ENCODE measurements at regions of chr3 and their contacts with region 1.

Region 1: GRCh38 chr3:126180477-126181397 is at the start of gene ALDH1L1:
- DNase-seq: peak; percentile 73 to 96
- H3K4me3 ChIP-seq: peak within 1 kb of the TSS; percentile 74 to 90
- H3K27ac ChIP-seq: peak within 1 kb of the TSS; percentile 98 to 99
- H3K4me1 ChIP-seq: peaks cover 10 to 15% of the 10 kb centered on the region in 2 donors
- H3K27me3 ChIP-seq: no peaks in the 10 kb centered on the region
- CTCF ChIP-seq: no peak
- total RNA-seq, gene ALDH1L1: 36.1 TPM

Region 2: GRCh38 chr3:126014252-126014651 is 166.5 kb before region 1 on chr3:
- intact Hi-C with region 1: no loop called
- DNase-seq: no peak
- H3K4me3 ChIP-seq: no peak overlapping the region
- H3K27ac ChIP-seq: no peak overlapping the region
- H3K4me1 ChIP-seq: no peaks in the 10 kb centered on the region
- H3K27me3 ChIP-seq: no peaks in the 10 kb centered on the region
- CTCF ChIP-seq: no peak

Region 3: GRCh38 chr3:126100634-126101301 is 80.0 kb before region 1 on chr3:
- intact Hi-C with region 1: loop called (anchors 2 kb)
- DNase-seq: peak in 1 of 2 donors; percentile 86
- H3K4me3 ChIP-seq: peak overlapping the region in 1 of 2 donors; percentile 48
- H3K27ac ChIP-seq: peak overlapping the region; percentile 96 to 98
- H3K4me1 ChIP-seq: peaks cover 24 to 46% of the 10 kb centered on the region in 2 donors
- H3K27me3 ChIP-seq: no peaks in the 10 kb centered on the region
- CTCF ChIP-seq: no peak

Region 4: GRCh38 chr3:126134219-126134975 is 46.3 kb before region 1 on chr3:
- intact Hi-C with region 1: loop called (anchors 5 kb)
- DNase-seq: peak in 1 of 2 donors; percentile 80
- H3K4me3 ChIP-seq: no peak overlapping the region
- H3K27ac ChIP-seq: no peak overlapping the region
- H3K4me1 ChIP-seq: no peaks in the 10 kb centered on the region
- H3K27me3 ChIP-seq: no peaks in the 10 kb centered on the region
- CTCF ChIP-seq: peak; percentile 80 to 87 (median 81)

Region 5: GRCh38 chr3:126205717-126206655 is 25.2 kb after region 1 on chr3:
- intact Hi-C with region 1: loop called (anchors 1 kb)
- DNase-seq: peak in 1 of 2 donors; percentile 73
- H3K4me3 ChIP-seq: peak overlapping the region in 1 of 2 donors; percentile 16
- H3K27ac ChIP-seq: peak overlapping the region; percentile 86 to 87
- H3K4me1 ChIP-seq: peaks cover 16 to 45% of the 10 kb centered on the region in 2 donors
- H3K27me3 ChIP-seq: no peaks in the 10 kb centered on the region
- CTCF ChIP-seq: no peak

Region 6: GRCh38 chr3:126259411-126260391 is 79.0 kb after region 1 on chr3:
- intact Hi-C with region 1: loop called (anchors 2 kb)
- DNase-seq: peak; percentile 36 to 91
- H3K4me3 ChIP-seq: peak overlapping the region in 1 of 2 donors; percentile 40
- H3K27ac ChIP-seq: peak overlapping the region; percentile 55 to 72
- H3K4me1 ChIP-seq: peaks cover 4 to 11% of the 10 kb centered on the region in 2 donors
- H3K27me3 ChIP-seq: no peaks in the 10 kb centered on the region
- CTCF ChIP-seq: peak; percentile 84 to 85 (median 85)

Region 7: GRCh38 chr3:126389112-126389793 is 208.5 kb after region 1 on chr3:
- intact Hi-C with region 1: loop called (anchors 5 kb)
- DNase-seq: peak; percentile 82 to 98
- H3K4me3 ChIP-seq: peak overlapping the region; percentile 39 to 61
- H3K27ac ChIP-seq: peak overlapping the region; percentile 90 to 93
- H3K4me1 ChIP-seq: peaks cover 4 to 6% of the 10 kb centered on the region in 2 donors
- H3K27me3 ChIP-seq: no peaks in the 10 kb centered on the region
- CTCF ChIP-seq: peak; percentile 96 to 99 (median 97)